PC-9 (cell line): ENCODE measurements at regions of chr14 and their contacts with region 1.

Region 1: GRCh38 chr14:51139121-51139681 is 44.3 kb upstream of the TRIM9 start:
- DNase-seq: peak; percentile 11 to 76
- H3K4me3 ChIP-seq: peak overlapping the region; percentile 15; the same call in 1 of the 2 replicates
- H3K27ac ChIP-seq: peak overlapping the region; percentile 27
- H3K4me1 ChIP-seq: peaks cover 15% of the 10 kb centered on the region
- H3K27me3 ChIP-seq: no peaks in the 10 kb centered on the region
- CTCF ChIP-seq: no peak

Region 2: GRCh38 chr14:50148799-50149198 is 990.4 kb before region 1 on chr14:
- CTCF ChIA-PET with region 1: no interaction called
- POLR2A ChIA-PET with region 1: interaction called, 35 read pairs
- intact Hi-C with region 1: no loop called
- DNase-seq: no peak
- H3K4me3 ChIP-seq: no peak overlapping the region
- H3K27ac ChIP-seq: no peak overlapping the region
- H3K4me1 ChIP-seq: peaks cover 8% of the 10 kb centered on the region
- H3K27me3 ChIP-seq: no peaks in the 10 kb centered on the region
- CTCF ChIP-seq: no peak

Region 3: GRCh38 chr14:50619556-50620141 is 519.6 kb before region 1 on chr14:
- CTCF ChIA-PET with region 1: no interaction called
- POLR2A ChIA-PET with region 1: no interaction called
- intact Hi-C with region 1: no loop called
- DNase-seq: no peak
- H3K4me3 ChIP-seq: no peak overlapping the region
- H3K27ac ChIP-seq: no peak overlapping the region
- H3K4me1 ChIP-seq: no peaks in the 10 kb centered on the region
- H3K27me3 ChIP-seq: no peaks in the 10 kb centered on the region
- CTCF ChIP-seq: peak; percentile 74